PC-9 (cell line): ENCODE measurements at regions of chr3 and their contacts with region 1.

Region 1: DNA sequence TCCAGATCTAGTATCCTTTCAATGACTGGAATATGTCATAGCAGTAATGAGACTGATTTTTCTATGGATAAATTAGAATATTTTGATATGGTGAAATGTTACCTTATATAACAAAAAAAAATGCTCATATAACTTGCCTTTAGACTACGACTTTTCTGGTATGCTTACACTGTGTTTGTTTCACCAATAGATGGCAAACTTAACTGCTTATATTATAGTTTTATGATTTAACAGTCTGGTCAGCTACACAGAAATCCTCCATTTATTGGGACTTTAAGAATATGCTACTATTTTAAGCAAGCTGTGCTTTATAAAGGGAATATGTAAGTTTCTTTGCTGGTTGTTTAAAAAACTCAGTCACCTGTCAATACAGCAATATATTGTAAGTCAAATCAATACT is 205.6 kb downstream of the VGLL3 start:
- DNase-seq: no peak
- H3K4me3 ChIP-seq: no peak overlapping the region
- H3K27ac ChIP-seq: no peak overlapping the region
- H3K4me1 ChIP-seq: 0 out of 2 replicates have a peak, but pooled peaks cover 9% of the 10 kb centered on the region
- H3K27me3 ChIP-seq: no peaks in the 10 kb centered on the region
- CTCF ChIP-seq: 0 out of 2 replicates have a peak, but pooled peaks have one; percentile 20

Region 2: DNA sequence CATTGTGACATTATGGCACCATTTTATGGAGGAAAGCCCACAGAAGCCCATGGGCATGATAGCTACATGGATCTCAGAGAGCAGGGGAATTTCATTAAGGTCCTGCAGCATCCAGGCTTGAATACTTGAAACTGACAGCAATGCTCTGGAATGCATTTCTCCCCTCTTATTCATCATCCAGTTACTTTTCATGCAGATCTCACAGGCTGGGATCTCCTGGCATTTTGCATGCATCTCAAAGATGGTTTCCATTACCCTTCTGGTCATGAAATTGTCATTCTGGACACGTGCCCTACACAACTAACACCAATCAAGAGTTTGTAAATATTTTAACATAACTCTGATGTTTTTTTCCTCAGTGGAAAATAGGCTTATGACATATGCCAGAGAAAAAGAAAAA is 173.1 kb after region 1 on chr3:
- CTCF ChIA-PET with region 1: no interaction called
- POLR2A ChIA-PET with region 1: no interaction called
- intact Hi-C with region 1: loop called (anchors 2 kb)
- DNase-seq: no peak
- H3K4me3 ChIP-seq: no peak overlapping the region
- H3K27ac ChIP-seq: no peak overlapping the region
- H3K4me1 ChIP-seq: peaks cover 13% of the 10 kb centered on the region; the same call in 1 of the 2 replicates
- H3K27me3 ChIP-seq: no peaks in the 10 kb centered on the region
- CTCF ChIP-seq: no peak

Region 3: DNA sequence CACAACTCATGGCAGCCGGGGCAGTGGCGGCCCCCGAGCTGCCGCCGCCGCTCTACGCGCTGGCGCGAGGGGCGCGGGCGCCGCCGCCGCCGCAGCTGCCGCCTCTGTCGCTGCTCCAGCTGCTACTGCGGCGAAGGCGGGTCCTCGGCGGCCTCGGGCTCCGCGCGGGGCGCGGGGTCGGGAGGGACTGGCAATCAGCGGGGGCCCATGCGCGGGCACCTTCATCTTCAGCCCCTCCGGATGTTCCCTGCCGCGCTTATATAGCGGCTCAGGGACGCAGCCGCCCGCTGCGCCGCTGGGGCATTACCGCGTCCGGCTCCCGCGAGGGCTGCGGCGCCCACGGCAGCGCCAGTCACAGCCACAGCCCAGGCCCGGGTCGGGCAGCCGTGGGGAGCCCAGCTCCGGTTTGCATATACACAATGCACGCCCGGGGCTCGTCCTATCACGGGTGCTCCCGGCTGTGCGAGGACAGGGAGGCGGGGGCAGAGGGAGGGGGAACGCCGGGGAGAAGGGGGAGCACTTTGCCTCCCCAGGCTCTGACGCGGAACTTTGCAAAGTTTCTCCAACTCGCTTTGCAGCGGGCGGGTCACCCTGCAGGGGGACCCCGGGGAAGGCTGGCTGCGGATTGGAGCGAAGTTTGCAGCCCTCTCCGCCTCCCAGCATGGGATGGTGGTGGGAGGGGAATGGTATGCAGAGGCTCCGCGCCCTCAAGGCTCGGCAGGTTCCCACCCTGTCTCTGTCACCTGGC is 205.5 kb after region 1 on chr3 and contains the start of gene VGLL3:
- CTCF ChIA-PET with region 1: no interaction called
- POLR2A ChIA-PET with region 1: interaction called, 7 read pairs
- intact Hi-C with region 1: loop called (anchors 1 kb)
- DNase-seq: peak; percentile 62 to 88
- H3K4me3 ChIP-seq: peak within 1 kb of the TSS; percentile 67
- H3K27ac ChIP-seq: peak within 1 kb of the TSS; percentile 69
- H3K4me1 ChIP-seq: peaks cover 49% of the 10 kb centered on the region
- H3K27me3 ChIP-seq: no peaks in the 10 kb centered on the region
- CTCF ChIP-seq: no peak; the same call in 1 of the 2 replicates
- total RNA-seq, gene VGLL3: 20.5 and 26.8 TPM in 2 replicates

Region 4: DNA sequence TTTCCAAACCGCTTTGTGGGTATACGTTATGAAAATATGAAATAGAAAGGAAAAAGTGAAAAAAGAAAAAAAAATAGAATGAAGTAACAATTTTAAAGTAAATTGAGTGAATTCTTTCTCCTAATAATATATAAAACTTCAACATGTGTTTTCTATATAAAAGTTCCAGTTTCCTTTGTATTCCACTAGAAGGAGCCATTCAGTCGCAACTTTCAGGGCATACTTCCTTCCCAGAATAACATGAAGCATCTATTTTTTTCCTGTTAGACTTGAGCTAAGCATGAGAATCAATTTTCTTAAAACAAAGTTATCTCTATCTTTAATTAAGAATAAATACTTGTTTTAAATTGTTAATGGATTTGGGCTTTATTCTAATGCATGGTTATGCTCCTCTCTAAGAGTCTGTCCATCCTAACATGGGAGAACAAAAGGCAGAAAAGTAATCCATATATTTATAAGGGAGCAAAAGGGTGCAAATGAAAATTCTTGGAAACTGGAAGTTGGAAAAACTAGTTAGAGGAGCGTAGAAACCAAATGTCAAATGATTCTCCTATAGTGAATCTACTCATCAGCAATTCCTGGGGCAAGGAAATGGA is 221.6 kb after region 1 on chr3:
- CTCF ChIA-PET with region 1: no interaction called
- POLR2A ChIA-PET with region 1: no interaction called
- intact Hi-C with region 1: loop called (anchors 5 kb)
- DNase-seq: peak in 1 of 2 experiments; percentile 34
- H3K4me3 ChIP-seq: no peak overlapping the region
- H3K27ac ChIP-seq: no peak overlapping the region
- H3K4me1 ChIP-seq: peaks cover 12% of the 10 kb centered on the region
- H3K27me3 ChIP-seq: no peaks in the 10 kb centered on the region
- CTCF ChIP-seq: peak; percentile 51

Region 5: GRCh38 chr3:87333393-87333892 is 548.1 kb after region 1 on chr3:
- CTCF ChIA-PET with region 1: no interaction called
- POLR2A ChIA-PET with region 1: no interaction called
- intact Hi-C with region 1: loop called (anchors 10 kb)
- DNase-seq: peak; percentile 54 to 97
- H3K4me3 ChIP-seq: peak overlapping the region; percentile 33; the same call in 1 of the 2 replicates
- H3K27ac ChIP-seq: peak overlapping the region; percentile 88
- H3K4me1 ChIP-seq: peaks cover 32% of the 10 kb centered on the region
- H3K27me3 ChIP-seq: no peaks in the 10 kb centered on the region
- CTCF ChIP-seq: no peak

Region 6: GRCh38 chr3:88267441-88267840 is 1482.1 kb after region 1 on chr3:
- CTCF ChIA-PET with region 1: no interaction called
- POLR2A ChIA-PET with region 1: no interaction called
- intact Hi-C with region 1: no loop called
- DNase-seq: no peak
- H3K4me3 ChIP-seq: no peak overlapping the region
- H3K27ac ChIP-seq: no peak overlapping the region
- H3K4me1 ChIP-seq: no peaks in the 10 kb centered on the region
- H3K27me3 ChIP-seq: no peaks in the 10 kb centered on the region
- CTCF ChIP-seq: no peak